Motor neuron (in vitro differentiated cells): ENCODE measurements at regions of chr11 and their contacts with region 1.

Region 1: GRCh38 chr11:92383430-92383829 is 158.8 kb downstream of the FAT3 start:
- ATAC-seq: peak in 4 of 8 experiments; percentile 26 to 87 (median 48)
- H3K4me3 ChIP-seq: no peak overlapping the region
- H3K27ac ChIP-seq: no peak overlapping the region
- H3K4me1 ChIP-seq: peaks cover 36 to 40% of the 10 kb centered on the region in 2 donors

Region 2: GRCh38 chr11:91904792-91905785 is 478.3 kb before region 1 on chr11:
- in situ Hi-C with region 1: no loop called
- ATAC-seq: no peak
- H3K4me3 ChIP-seq: no peak overlapping the region
- H3K27ac ChIP-seq: no peak overlapping the region
- H3K4me1 ChIP-seq: peaks cover 6% of the 10 kb centered on the region in 2 donors

Region 3: GRCh38 chr11:92480499-92480898 is 97.1 kb after region 1 on chr11:
- in situ Hi-C with region 1: loop called in 1 of 9 experiments (anchors 25 kb)
- ATAC-seq: no peak
- H3K4me3 ChIP-seq: no peak overlapping the region
- H3K27ac ChIP-seq: no peak overlapping the region
- H3K4me1 ChIP-seq: peaks cover 31 to 58% of the 10 kb centered on the region in 2 donors

Region 4: DNA sequence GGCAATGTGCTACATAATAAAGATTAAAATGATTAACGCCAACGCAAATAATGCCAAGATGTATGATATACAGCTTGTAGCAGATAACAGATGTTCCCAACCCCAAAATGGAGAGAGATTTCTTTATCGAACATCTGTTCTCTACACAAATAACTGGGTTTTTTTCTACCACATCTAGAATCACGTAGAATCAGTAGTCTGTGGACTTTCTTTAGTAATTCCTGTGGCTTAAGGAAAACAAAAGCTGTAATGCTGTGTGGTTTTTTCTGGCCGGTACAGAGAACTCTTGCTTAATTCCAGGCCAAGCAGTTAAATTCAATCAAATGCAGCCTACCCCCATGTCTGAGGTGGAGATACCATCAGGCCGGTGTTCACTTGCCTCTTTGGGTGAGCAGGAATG is 144.6 kb after region 1 on chr11:
- in situ Hi-C with region 1: loop called in 1 of 9 experiments (anchors 25 kb)
- ATAC-seq: no peak
- H3K4me3 ChIP-seq: no peak overlapping the region
- H3K27ac ChIP-seq: no peak overlapping the region
- H3K4me1 ChIP-seq: peaks cover 36 to 66% of the 10 kb centered on the region in 2 donors

Region 5: GRCh38 chr11:92765965-92766371 is 382.5 kb after region 1 on chr11:
- in situ Hi-C with region 1: no loop called
- ATAC-seq: peak in 5 of 8 experiments; percentile 17 to 56 (median 26)
- H3K4me3 ChIP-seq: no peak overlapping the region
- H3K27ac ChIP-seq: no peak overlapping the region
- H3K4me1 ChIP-seq: peaks cover 7 to 40% of the 10 kb centered on the region in 2 donors